ENCODE measurements at regions of chr11 and their contacts with region 1.

Region 1: GRCh38 chr11:36289226-36289852 is at the start of gene COMMD9:
- DNase-seq: peak; percentile 98
- total RNA-seq, gene COMMD9: 37.3 to 39.1 TPM

Region 2: GRCh38 chr11:36478700-36479329 is 189.5 kb after region 1 on chr11:
- intact Hi-C with region 1: loop called in 1 of 2 experiments (anchors 10 kb)
- DNase-seq: no peak

Region 3: DNA sequence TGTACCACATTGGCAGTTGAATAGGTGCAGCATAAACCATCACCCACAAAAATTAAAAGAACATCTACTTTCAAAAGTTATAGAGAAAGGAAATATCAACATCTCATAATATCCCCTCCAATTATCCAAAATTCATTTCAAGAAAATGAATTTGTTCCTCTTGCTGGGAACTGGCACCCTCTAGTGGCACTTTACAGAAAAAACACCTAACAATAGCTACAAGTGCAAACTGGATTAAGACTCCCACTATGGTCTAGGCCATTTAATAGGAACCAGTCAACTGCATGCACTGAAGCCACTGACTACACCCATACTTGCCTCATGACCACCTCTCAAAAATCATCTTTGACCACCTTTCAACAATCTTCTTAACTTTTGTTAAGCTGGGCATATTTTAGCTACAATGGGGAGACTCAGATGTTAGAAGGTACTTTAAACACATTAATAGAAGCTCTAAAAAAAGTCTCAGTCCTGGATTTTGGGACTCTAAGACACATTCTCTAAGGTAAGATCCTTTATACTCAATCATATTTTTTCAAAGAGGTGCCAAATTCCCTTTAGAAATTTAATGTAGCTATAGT is 203.5 kb after region 1 on chr11:
- intact Hi-C with region 1: loop called in 1 of 2 experiments (anchors 5 kb)
- DNase-seq: no peak

Region 4: GRCh38 chr11:36550385-36551115 is 261.2 kb after region 1 on chr11:
- intact Hi-C with region 1: no loop called
- DNase-seq: no peak

Measured in posterior vena cava (tissue), 2 donors.